Heart left ventricle (tissue), 16 donors: ENCODE measurements at regions of chr12 and their contacts with region 1.

Region 1: GRCh38 chr12:113221181-113221997 is at the start of gene TPCN1:
- DNase-seq: peak; percentile 99 to 100 (median 100)
- ATAC-seq: peak; percentile 95 to 98 (median 96)
- H3K4me3 ChIP-seq: peak within 1 kb of the TSS; percentile 64 to 97 (median 84)
- H3K27ac ChIP-seq: peak within 1 kb of the TSS; percentile 61 to 98 (median 94)
- H3K4me1 ChIP-seq: peaks cover 9 to 57% (median 43%) of the 10 kb centered on the region in 12 donors
- H3K27me3 ChIP-seq: no peaks in the 10 kb centered on the region
- CTCF ChIP-seq: peak in 1 of 12 donors; percentile 8
- POLR2A ChIP-seq: peak; percentile 97 to 100
- total RNA-seq, gene TPCN1: 52.1 to 136 (median 92.0) TPM

Region 2: DNA sequence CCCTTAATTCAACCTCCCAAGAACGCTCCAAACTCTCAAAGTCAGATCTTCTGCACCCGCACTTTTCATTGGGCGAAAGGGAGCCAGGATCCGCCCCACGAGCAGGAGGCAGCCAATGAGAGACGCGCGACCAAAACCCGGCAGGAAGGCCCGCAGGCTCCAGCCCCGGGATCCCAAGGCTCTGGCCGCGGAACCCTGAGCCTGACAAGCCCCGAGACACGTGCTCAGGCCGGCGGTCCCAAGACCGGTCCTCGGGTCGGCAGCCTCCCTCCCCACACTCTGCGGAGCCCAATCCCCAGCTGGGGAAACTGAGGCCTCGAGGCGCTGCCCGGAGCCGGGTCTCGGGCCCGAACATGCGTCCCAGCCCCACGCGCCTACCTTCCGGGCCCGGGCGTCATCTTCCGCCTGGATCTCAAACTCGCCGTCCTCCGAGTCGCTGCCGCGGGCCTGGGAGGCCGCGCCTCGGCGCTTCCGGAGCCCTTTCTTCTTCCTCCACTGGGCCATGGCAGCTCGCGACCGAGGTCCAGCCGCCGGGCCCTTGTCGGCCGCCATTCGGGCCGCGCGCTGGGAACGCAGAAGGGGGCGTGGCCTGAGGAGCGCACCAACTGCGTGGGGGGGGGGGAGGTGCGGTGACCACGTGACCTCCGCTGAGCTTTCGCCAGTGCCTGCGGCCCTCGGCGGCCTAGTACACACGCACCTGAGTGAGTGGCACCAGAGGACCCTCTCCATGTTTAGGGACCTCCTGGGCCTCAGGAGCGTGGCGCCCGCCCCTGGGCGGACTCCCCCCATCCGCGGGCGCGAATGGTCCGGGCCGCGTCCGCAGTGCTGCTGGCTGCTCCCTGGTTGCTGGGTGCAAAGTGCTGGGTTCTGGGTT is 36.3 kb before region 1 on chr12 and contains the starts of genes DDX54 and RITA1:
- intact Hi-C with region 1: loop called in 1 of 10 experiments (anchors 1 kb)
- DNase-seq: peak; percentile 89 to 94 (median 91)
- ATAC-seq: peak; percentile 78 to 93 (median 92)
- H3K4me3 ChIP-seq: peak within 1 kb of the TSS; percentile 73 to 100 (median 96)
- H3K27ac ChIP-seq: peak within 1 kb of the TSS; percentile 86 to 98 (median 95)
- H3K4me1 ChIP-seq: peaks cover 0 to 33% (median 21%) of the 10 kb centered on the region in 12 donors
- H3K27me3 ChIP-seq: no peaks in the 10 kb centered on the region
- CTCF ChIP-seq: no peak
- POLR2A ChIP-seq: peak in 1 of 2 donors; percentile 39
- total RNA-seq, gene DDX54: 28.2 to 60.2 (median 38.2) TPM
- total RNA-seq, gene RITA1: 13.3 to 30.7 (median 16.0) TPM

Region 3: GRCh38 chr12:113244047-113244460 is 22.7 kb after region 1 on chr12:
- intact Hi-C with region 1: loop called in 2 of 10 experiments (anchors 1 to 2 kb)
- DNase-seq: peak; percentile 71 to 83 (median 76)
- ATAC-seq: peak; percentile 11 to 47 (median 29)
- H3K4me3 ChIP-seq: peak overlapping the region in 9 of 12 donors; percentile 11 to 49 (median 33)
- H3K27ac ChIP-seq: peak overlapping the region; percentile 74 to 94 (median 88)
- H3K4me1 ChIP-seq: peaks cover 14 to 95% (median 80%) of the 10 kb centered on the region in 12 donors
- H3K27me3 ChIP-seq: no peaks in the 10 kb centered on the region
- CTCF ChIP-seq: no peak
- POLR2A ChIP-seq: no peak

Region 4: GRCh38 chr12:113261847-113262470 is 40.6 kb after region 1 on chr12:
- intact Hi-C with region 1: loop called in 5 of 10 experiments (anchors 2 to 5 kb)
- DNase-seq: no peak
- ATAC-seq: no peak
- H3K4me3 ChIP-seq: no peak overlapping the region
- H3K27ac ChIP-seq: peak overlapping the region in 10 of 12 donors; percentile 6 to 81 (median 70)
- H3K4me1 ChIP-seq: peaks cover 10 to 57% (median 39%) of the 10 kb centered on the region in 12 donors
- H3K27me3 ChIP-seq: no peaks in the 10 kb centered on the region
- CTCF ChIP-seq: no peak
- POLR2A ChIP-seq: no peak

Region 5: GRCh38 chr12:113271853-113272561 is 50.6 kb after region 1 on chr12:
- intact Hi-C with region 1: loop called in 2 of 10 experiments (anchors 5 to 10 kb)
- DNase-seq: peak; percentile 79 to 92 (median 86)
- ATAC-seq: peak; percentile 74 to 92 (median 89)
- H3K4me3 ChIP-seq: peak overlapping the region in 4 of 12 donors; percentile 2 to 22 (median 6)
- H3K27ac ChIP-seq: peak overlapping the region; percentile 69 to 94 (median 85)
- H3K4me1 ChIP-seq: peaks cover 6 to 52% (median 30%) of the 10 kb centered on the region in 12 donors
- H3K27me3 ChIP-seq: no peaks in the 10 kb centered on the region
- CTCF ChIP-seq: no peak
- POLR2A ChIP-seq: peak in 1 of 2 donors; percentile 22

Region 6: DNA sequence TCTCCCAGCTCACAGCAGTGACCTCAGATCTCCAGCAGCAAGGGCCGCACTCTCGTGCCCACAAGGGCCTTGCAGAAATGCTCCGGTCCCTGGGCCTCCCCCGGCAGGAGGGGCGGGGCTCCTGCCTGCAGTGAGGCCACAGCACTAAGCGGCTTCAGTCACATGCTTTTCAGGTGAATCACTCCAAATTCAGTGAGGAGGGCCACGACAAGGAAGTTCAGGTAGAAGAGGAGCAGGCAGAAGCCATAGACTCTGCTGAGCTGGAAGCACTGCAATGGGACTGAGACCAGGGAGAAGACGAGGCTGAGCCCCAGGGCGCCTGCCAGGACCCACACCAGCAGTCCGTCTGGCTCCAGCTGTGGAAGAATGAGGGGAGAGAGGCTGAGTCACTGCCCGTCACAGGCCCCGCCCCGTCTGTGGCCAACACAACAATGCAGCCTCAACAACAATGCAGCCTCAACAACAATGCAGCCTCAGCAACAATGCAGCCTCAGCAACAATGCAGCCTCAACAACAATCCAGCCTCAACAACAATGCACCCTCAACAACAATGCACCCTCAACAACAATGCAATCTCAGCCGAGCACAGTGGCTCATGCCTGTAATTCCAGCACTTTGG is 78.3 kb after region 1 on chr12:
- intact Hi-C with region 1: loop called in 2 of 10 experiments (anchors 5 kb)
- DNase-seq: peak; percentile 57 to 86 (median 82)
- ATAC-seq: peak; percentile 17 to 75 (median 54)
- H3K4me3 ChIP-seq: no peak overlapping the region
- H3K27ac ChIP-seq: peak overlapping the region; percentile 70 to 91 (median 84)
- H3K4me1 ChIP-seq: peaks cover 0 to 53% (median 31%) of the 10 kb centered on the region in 12 donors
- H3K27me3 ChIP-seq: no peaks in the 10 kb centered on the region
- CTCF ChIP-seq: no peak
- POLR2A ChIP-seq: no peak